Dorsolateral prefrontal cortex (tissue), 120 donors: ENCODE measurements at regions of chr17 and their contacts with region 1.

Region 1: DNA sequence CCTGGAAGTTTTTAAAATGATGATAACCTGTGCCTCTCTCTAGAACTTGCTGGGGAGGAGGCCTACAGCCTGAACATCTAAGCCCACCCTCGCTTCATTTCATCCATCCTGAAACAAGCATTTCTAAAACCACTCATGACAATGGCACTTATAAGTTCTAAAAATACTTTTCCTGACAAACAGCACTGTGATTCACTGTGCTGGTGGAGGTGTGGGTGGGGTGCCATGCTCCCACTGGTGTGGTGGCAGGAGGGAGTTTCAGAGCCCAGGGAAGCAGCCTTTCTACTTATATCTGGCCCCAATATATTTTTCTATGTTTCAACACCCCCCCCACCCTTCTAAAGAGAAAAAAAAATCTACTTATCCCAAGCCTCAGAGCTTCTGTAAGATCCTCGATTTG is 52.6 kb downstream of the RAB11FIP4 start:
- DNase-seq: peak in 4 of 10 donors; percentile 56 to 70 (median 62)
- H3K4me3 ChIP-seq: no peak overlapping the region
- H3K27ac ChIP-seq: peak overlapping the region in 49 of 59 donors; percentile 2 to 77 (median 59)
- H3K27me3 ChIP-seq: no peaks in the 10 kb centered on the region
- CTCF ChIP-seq: no peak

Region 2: GRCh38 chr17:31394544-31394943 is 49.5 kb before region 1 on chr17:
- intact Hi-C with region 1: no loop called
- DNase-seq: peak in 7 of 10 donors; percentile 20 to 77 (median 68)
- H3K4me3 ChIP-seq: peak overlapping the region in 48 of 59 donors; percentile 7 to 86 (median 70)
- H3K27ac ChIP-seq: peak overlapping the region in 24 of 59 donors; percentile 1 to 91 (median 82)
- H3K27me3 ChIP-seq: peaks cover 0 to 6% (median 0%) of the 10 kb centered on the region in 45 donors
- CTCF ChIP-seq: peak in 1 of 56 donors; percentile 15

Region 3: DNA sequence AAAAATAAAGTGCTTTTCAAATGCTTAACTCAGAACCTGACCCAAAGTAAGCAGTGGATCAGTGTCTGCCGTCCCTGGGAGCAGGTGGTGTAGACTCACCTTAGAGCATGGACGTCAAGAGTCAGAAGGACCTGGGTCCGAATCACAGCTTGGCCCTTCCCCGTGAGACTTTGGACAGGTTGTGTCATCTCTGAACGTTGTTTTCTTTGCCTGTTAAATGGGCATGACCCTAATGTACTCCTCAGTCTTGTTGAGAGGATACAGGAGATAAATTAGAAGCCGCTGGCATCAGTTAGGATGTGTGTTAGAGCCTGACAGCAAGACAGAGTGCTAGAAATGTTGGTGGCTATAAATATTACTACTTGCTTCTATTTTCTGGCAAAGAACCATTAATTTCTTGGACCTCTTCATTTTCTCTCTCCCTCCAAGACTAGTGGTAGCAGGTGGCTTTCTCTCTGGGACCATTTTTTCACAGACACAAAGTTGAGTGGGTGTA is 16.2 kb after region 1 on chr17:
- intact Hi-C with region 1: loop called in 1 of 2 experiments (anchors 2 kb)
- DNase-seq: no peak
- H3K4me3 ChIP-seq: no peak overlapping the region
- H3K27ac ChIP-seq: peak overlapping the region in 8 of 59 donors; percentile 4 to 57 (median 16)
- H3K27me3 ChIP-seq: no peaks in the 10 kb centered on the region
- CTCF ChIP-seq: no peak